ENCODE measurements at regions of chr17 and their contacts with region 1.

Region 1: DNA sequence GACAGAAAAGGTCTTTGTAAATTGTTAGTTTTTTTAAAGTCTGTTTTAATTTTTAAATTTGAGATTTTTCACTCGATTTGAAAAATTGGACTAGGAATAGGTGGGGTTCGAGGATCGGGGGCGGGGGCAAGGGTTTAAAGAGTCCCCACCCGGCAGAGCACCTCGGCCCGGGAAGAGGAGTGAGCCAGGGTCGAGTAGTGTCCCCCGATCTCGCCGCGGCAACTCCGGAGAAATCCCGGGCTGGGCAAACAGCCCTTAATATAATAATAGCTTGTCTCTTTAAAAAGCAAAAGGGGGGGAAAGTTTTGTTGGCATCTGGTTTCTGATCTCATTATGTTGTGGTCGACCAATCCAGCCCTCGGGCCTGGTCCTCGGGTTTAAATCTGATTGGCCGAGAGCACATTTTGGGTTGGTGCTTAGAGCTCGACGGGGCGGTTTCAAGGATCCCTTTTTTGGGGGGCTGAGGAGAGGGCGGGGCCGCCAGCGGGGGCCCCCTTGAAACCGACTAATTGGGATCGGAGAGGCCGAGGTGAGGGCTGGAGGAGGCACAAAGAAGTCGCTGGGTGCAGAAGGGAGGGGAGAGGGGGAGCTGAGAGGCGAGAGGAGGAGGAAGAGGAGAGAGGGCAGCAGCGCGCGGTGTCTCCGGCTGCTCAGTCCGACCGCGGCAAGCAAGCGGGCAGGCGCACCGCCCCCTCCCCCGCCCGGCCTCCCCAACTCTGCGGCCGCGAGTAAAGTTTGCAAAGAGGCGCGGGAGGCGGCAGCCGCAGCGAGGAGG is at the start of gene FZD2:
- DNase-seq: peak; percentile 61
- ATAC-seq: peak; percentile 74
- H3K4me3 Mint-ChIP-seq: peak within 1 kb of the TSS; percentile 73
- H3K27ac Mint-ChIP-seq: no peak within 1 kb of the TSS
- H3K4me1 Mint-ChIP-seq: peaks cover 18% of the 10 kb centered on the region
- H3K27me3 Mint-ChIP-seq: peaks cover 63% of the 10 kb centered on the region
- total RNA-seq, gene FZD2: 0.07 to 0.09 TPM

Region 2: GRCh38 chr17:44572801-44573200 is 15.8 kb after region 1 on chr17:
- CTCF ChIA-PET with region 1: no interaction called
- POLR2A ChIA-PET with region 1: no interaction called
- intact Hi-C with region 1: no loop called
- DNase-seq: no peak
- ATAC-seq: no peak
- H3K4me3 Mint-ChIP-seq: no peak overlapping the region
- H3K27ac Mint-ChIP-seq: no peak overlapping the region
- H3K4me1 Mint-ChIP-seq: no peaks in the 10 kb centered on the region
- H3K27me3 Mint-ChIP-seq: peaks cover 11% of the 10 kb centered on the region

Region 3: GRCh38 chr17:44708401-44709181 is 151.6 kb after region 1 on chr17 and contains the start of gene DBF4B:
- CTCF ChIA-PET with region 1: no interaction called
- POLR2A ChIA-PET with region 1: interaction called, 3 read pairs
- intact Hi-C with region 1: loop called in 1 of 2 experiments (anchors 1 kb)
- DNase-seq: peak; percentile 89
- ATAC-seq: peak; percentile 85
- H3K4me3 Mint-ChIP-seq: no peak within 1 kb of the TSS
- H3K27ac Mint-ChIP-seq: no peak within 1 kb of the TSS
- H3K4me1 Mint-ChIP-seq: peaks cover 5% of the 10 kb centered on the region
- H3K27me3 Mint-ChIP-seq: peaks cover 5% of the 10 kb centered on the region
- total RNA-seq, gene DBF4B: 23.5 to 26.4 TPM

Region 4: DNA sequence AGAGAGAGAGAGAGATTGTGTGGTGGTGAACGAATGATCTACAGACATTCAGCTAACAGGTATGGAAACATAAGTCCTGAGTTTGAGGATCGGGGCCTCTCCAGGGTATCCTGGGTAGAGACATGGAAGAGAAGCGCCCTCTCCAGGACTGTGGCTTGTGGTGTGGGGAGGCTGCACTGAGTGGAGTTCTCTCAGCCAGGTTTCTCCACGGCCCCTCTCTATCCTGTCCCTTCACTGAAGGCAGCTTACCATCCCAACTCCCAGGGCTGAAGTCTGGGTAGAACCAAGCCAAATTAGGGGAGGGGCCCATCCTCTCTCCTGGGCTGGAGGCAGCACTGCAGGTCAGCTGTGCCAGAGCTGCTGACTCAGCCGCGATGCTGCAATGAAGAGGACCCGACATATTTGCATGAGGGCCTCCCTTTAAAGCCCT is 404.9 kb after region 1 on chr17:
- CTCF ChIA-PET with region 1: no interaction called
- POLR2A ChIA-PET with region 1: no interaction called
- intact Hi-C with region 1: loop called in 1 of 2 experiments (anchors 5 kb)
- DNase-seq: no peak
- ATAC-seq: no peak
- H3K4me3 Mint-ChIP-seq: no peak overlapping the region
- H3K27ac Mint-ChIP-seq: no peak overlapping the region
- H3K4me1 Mint-ChIP-seq: peaks cover 9% of the 10 kb centered on the region
- H3K27me3 Mint-ChIP-seq: peaks cover 41% of the 10 kb centered on the region

Measured in activated CD4-positive, alpha-beta T cell treated with anti-CD3 and anti-CD28 coated beads for 36 hours (primary cell).